ENCODE measurements at regions of chr16 and their contacts with region 1.

Region 1: GRCh38 chr16:46801428-46802049 is 29.4 kb downstream of the C16orf87 start:
- DNase-seq: no peak
- H3K4me3 ChIP-seq: no peak overlapping the region
- H3K27me3 ChIP-seq: no peaks in the 10 kb centered on the region
- CTCF ChIP-seq: peak; percentile 37

Region 2: DNA sequence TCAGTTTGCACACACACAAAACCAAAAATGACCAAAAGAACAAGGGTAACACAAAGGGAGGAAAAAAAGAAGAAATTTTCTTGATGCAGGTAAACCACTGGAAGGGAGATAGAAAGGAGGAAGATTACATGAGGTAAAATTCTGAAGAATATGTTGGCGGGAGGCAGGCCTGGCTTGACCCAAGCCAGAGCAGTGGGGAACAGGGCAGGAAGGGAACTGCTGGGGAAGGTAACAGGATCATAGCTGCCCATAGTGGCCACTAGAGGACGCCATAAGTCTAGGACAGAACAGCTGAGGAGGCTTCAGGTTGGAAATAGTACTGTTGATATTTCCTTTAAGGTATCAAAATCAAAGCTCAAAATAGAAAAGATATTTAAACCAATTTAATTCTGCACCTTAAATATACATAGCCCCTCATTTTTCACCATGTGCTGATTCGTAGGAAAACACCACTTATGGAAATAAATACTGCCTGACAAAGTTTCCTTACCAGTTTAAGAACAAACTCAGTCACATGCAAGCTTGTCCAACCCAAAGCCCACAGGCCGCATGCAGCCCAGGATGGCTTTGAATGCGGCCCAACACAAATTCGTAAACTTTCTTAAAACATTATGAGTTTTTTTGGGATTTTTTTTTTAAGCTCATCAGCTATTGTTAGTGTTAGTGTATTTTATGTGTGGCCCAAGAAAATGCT is 128.1 kb before region 1 on chr16:
- CTCF ChIA-PET with region 1: interaction called, 43 read pairs
- POLR2A ChIA-PET with region 1: no interaction called
- DNase-seq: no peak
- H3K4me3 ChIP-seq: no peak overlapping the region
- H3K27me3 ChIP-seq: no peaks in the 10 kb centered on the region
- CTCF ChIP-seq: peak; percentile 96

Region 3: GRCh38 chr16:46689365-46690280 is 111.9 kb before region 1 on chr16 and contains the start of gene ORC6:
- CTCF ChIA-PET with region 1: interaction called, 11 read pairs
- POLR2A ChIA-PET with region 1: no interaction called
- DNase-seq: no peak
- H3K4me3 ChIP-seq: peak within 1 kb of the TSS; percentile 81
- H3K27me3 ChIP-seq: no peaks in the 10 kb centered on the region
- CTCF ChIP-seq: peak; percentile 71
- polyA plus RNA-seq, gene ORC6: 8.0 and 8.9 TPM in 2 replicates

Region 4: DNA sequence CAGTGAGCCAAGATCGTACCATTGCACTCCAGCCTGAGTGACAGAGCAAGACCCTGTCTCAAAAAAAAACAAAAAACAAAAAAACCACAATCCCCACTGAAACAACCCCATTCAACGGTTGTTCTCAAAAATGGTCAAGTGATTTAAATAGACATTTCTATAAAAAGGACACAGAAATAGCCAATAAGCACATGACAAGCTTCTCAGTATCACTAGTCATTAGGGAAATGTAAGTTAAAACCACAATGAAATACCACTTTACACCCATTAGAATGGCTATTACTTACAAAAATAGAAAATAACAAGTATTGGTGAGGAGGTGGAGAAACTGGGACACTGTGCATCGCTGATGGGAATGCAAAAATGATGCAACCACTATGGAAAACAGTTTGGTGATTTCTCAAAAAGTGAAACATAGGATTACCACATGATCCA is 26.8 kb before region 1 on chr16:
- CTCF ChIA-PET with region 1: no interaction called
- POLR2A ChIA-PET with region 1: no interaction called
- DNase-seq: no peak
- H3K4me3 ChIP-seq: no peak overlapping the region
- H3K27me3 ChIP-seq: no peaks in the 10 kb centered on the region
- CTCF ChIP-seq: no peak

Region 5: DNA sequence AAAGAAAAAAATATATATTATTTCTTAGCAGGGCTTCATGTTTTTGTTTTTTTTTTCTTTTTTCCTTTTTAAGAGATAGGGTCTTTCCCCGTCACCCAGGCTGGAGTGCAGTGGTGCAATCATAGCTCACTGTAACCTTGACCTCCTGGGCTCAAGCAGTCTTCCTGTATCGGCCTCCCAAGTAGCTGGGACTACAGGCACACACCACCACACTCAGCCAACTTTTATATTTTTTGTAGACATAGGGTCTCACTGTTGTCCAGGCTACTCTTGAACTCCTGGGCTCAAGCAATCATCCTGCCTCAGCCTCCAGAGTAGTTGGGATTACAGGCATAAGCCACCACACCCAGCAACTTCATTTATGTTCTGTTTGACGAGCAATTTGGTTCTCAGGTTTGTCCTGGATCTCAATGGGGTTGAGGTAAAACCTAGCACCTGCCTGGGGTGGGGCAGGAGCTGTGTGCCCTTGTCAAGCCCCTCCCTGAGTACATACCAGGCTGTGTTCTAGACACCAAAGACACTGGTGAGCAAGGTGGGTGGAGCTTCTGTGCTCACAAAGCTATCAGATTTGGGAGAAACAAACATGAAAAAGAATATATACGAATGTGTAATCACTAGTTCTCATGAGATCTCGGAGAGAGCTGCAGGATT is 101.8 kb after region 1 on chr16:
- CTCF ChIA-PET with region 1: no interaction called
- POLR2A ChIA-PET with region 1: no interaction called
- DNase-seq: no peak
- H3K4me3 ChIP-seq: no peak overlapping the region
- H3K27me3 ChIP-seq: no peaks in the 10 kb centered on the region
- CTCF ChIP-seq: no peak

Measured in BJ (cell line).